PC-9 (cell line): ENCODE measurements at regions of chr2 and their contacts with region 1.

Region 1: GRCh38 chr2:233105156-233105895 is 45.2 kb downstream of the INPP5D start:
- DNase-seq: no peak
- H3K4me3 ChIP-seq: no peak overlapping the region
- H3K27ac ChIP-seq: no peak overlapping the region
- H3K4me1 ChIP-seq: no peaks in the 10 kb centered on the region
- H3K27me3 ChIP-seq: no peaks in the 10 kb centered on the region
- CTCF ChIP-seq: no peak

Region 2: DNA sequence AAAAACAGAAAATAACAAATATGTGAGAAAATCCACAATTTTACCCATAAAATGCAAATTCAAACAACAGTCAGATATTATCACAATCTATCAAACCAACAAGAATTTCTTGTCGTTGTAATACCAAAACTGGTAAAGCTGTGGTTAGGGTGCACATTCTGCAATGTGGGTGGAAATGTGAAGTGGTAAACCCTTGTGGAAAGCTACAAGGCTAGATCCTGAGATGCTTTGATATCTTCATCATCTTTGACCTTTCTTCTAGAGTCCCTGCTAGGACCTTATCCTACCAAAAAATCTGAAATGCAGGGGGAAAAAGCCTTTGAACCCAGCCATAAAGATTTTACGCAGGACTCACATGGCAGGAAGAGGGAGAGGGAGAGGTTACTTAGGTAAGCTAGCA is 128.9 kb after region 1 on chr2:
- CTCF ChIA-PET with region 1: interaction called, 28 read pairs
- POLR2A ChIA-PET with region 1: no interaction called
- intact Hi-C with region 1: no loop called
- DNase-seq: no peak
- H3K4me3 ChIP-seq: no peak overlapping the region
- H3K27ac ChIP-seq: no peak overlapping the region
- H3K4me1 ChIP-seq: no peaks in the 10 kb centered on the region
- H3K27me3 ChIP-seq: no peaks in the 10 kb centered on the region
- CTCF ChIP-seq: no peak